ENCODE measurements at regions of chrX and their contacts with region 1.

Region 1: DNA sequence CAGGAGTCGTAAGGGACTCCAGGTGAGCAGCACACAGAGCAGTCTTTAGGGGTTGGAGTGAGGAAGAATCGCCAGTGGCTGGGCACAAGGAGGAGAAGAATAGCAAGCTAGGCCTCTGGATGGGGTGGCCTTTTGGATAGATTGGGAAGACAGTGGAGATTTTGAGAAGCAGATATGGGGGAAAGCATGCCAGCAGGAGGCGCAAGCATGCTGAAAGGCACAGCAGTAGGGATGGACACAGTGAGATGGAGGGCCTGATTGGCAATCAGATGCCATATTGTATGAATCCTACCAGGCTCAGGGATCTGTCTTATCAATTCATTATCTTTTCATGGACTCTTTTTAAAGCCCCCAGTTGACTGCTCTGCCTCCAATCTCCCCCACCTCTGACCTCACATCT is 60.4 kb upstream of the MAGEA4 start:
- DNase-seq: no peak
- ATAC-seq: no peak
- H3K4me3 ChIP-seq: no peak overlapping the region
- H3K27ac ChIP-seq: no peak overlapping the region
- H3K4me1 ChIP-seq: no peaks in the 10 kb centered on the region
- H3K27me3 ChIP-seq: no peaks in the 10 kb centered on the region
- CTCF ChIP-seq: 0 out of 2 replicates have a peak, but pooled peaks have one; percentile 16

Region 2: DNA sequence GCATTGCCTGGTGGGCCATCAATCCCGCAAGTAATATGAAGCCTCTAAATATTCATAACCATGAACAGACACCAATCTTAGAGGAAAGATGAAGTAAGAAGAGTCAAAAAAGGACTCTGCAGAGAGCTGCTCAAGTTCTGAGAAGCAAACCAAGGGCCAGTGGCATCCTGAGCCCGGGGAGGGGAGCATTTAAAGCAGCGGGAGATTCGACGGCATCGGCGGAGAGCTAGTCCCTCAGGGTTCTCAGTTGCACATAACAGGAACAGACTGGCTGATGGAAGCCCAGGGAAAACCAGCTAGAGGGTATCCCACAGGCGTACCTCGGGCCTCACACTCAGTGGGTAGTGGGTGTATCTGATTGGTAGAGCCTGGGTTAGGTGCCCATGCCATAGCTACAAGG is 1553.7 kb after region 1 on chrX:
- CTCF ChIA-PET with region 1: no interaction called
- POLR2A ChIA-PET with region 1: interaction called, 11 read pairs
- in situ Hi-C with region 1: no loop called
- intact Hi-C with region 1: no loop called
- DNase-seq: no peak
- ATAC-seq: no peak
- H3K4me3 ChIP-seq: no peak overlapping the region
- H3K27ac ChIP-seq: no peak overlapping the region
- H3K4me1 ChIP-seq: no peaks in the 10 kb centered on the region
- H3K27me3 ChIP-seq: no peaks in the 10 kb centered on the region
- CTCF ChIP-seq: no peak

Measured in Panc1 (cell line).